Heart left ventricle (tissue), 16 donors: ENCODE measurements at regions of chr11 and their contacts with region 1.

Region 1: DNA sequence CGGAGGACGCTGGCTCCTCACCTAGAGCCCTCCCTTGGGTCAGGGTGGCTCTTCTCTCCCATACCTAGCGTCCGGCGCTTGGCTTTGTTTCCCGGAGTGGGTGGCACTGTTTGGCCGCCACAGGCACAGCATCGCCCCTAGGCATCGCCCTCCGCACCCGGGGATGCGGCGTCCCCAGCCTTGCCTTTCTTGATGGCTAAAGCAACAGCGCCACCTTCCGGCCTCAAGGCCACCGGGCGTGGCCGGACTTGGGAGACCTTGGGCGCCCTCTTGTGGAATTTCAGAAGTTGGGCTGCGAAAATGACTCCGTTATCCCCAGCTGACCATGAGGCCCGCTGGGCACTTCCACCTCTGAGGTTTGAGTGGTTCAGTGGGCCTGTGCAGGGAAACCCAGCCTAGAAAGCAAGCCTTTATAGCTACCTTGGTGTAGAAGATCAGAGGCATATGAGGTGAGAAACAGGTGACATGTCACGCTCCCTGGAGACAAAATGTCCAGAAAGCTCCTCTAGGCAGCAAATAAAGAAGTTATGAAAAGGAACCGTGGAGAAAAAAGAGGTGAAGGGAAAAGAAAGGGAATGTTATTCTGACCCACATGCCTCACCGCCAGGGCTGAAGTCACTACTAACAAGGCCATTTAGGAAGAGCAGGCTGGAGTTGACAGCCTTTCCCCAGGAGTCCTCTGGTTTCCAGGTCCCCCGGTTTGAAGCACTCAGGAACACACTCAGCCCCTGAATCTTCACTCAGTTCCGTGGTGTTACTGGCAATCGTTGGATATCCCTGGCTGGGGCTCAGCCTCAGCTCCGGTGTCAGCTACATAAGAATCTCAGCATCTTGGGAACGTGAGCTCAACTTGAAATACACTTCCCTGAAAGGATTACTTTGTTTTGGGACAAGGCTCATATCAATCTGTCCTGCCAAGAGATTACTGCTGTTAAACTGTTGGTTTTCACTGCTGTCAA is 54.1 kb downstream of the SNX19 start:
- DNase-seq: peak; percentile 87 to 95 (median 90)
- ATAC-seq: peak; percentile 38 to 72 (median 58)
- H3K4me3 ChIP-seq: peak overlapping the region in 1 of 12 donors; percentile 2
- H3K27ac ChIP-seq: peak overlapping the region in 1 of 12 donors; percentile 28
- H3K4me1 ChIP-seq: peaks cover 0 to 37% (median 15%) of the 10 kb centered on the region in 12 donors
- H3K27me3 ChIP-seq: no peaks in the 10 kb centered on the region
- CTCF ChIP-seq: peak; percentile 99 to 100 (median 100)
- POLR2A ChIP-seq: no peak

Region 2: DNA sequence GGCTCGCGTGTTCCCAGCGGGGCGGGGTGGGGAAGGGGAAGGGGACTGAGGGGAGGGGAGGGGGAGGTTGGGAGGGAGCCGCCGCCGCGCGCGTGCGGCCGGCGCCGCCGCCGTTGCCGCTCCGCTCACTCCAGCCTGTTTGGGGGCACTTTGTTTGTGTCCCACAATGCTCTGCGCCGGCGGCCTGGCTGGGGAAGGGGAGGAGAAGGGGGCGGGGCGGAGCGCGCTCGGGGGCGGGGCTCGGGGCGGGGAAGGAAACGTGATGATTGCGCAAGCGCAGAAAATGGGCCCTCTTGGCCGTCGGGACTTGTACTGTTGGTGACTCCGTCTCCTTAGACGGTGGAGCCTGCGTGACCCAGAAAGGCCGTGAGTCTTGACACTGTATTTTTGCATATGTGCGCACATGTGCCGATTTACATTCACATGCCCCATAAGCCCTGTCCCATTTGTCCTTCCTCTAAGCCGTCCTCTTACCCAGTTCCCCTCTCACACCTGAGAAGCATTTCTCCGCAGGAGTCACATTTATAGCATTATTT is 547.4 kb before region 1 on chr11 and contains the start of gene ZBTB44:
- intact Hi-C with region 1: loop called in 1 of 10 experiments (anchors 5 kb)
- DNase-seq: peak; percentile 94 to 97 (median 95)
- ATAC-seq: peak; percentile 97 to 98 (median 97)
- H3K4me3 ChIP-seq: peak within 1 kb of the TSS; percentile 64 to 99 (median 94)
- H3K27ac ChIP-seq: peak within 1 kb of the TSS; percentile 66 to 96 (median 92)
- H3K4me1 ChIP-seq: peaks cover 0 to 42% (median 23%) of the 10 kb centered on the region in 12 donors
- H3K27me3 ChIP-seq: no peaks in the 10 kb centered on the region
- CTCF ChIP-seq: no peak
- POLR2A ChIP-seq: no peak
- total RNA-seq, gene ZBTB44: 31.9 to 56.3 (median 40.3) TPM

Region 3: GRCh38 chr11:130894322-130895025 is 32.3 kb after region 1 on chr11:
- intact Hi-C with region 1: loop called in 5 of 10 experiments (anchors 2 kb)
- DNase-seq: peak; percentile 58 to 68 (median 67)
- ATAC-seq: peak in 3 of 4 donors; percentile 27 to 51 (median 40)
- H3K4me3 ChIP-seq: no peak overlapping the region
- H3K27ac ChIP-seq: peak overlapping the region in 5 of 12 donors; percentile 18 to 96 (median 29)
- H3K4me1 ChIP-seq: peaks cover 0 to 69% (median 26%) of the 10 kb centered on the region in 12 donors
- H3K27me3 ChIP-seq: no peaks in the 10 kb centered on the region
- CTCF ChIP-seq: peak; percentile 80 to 90 (median 88)
- POLR2A ChIP-seq: no peak

Region 4: GRCh38 chr11:130964058-130964792 is 102.0 kb after region 1 on chr11:
- intact Hi-C with region 1: no loop called
- DNase-seq: no peak
- ATAC-seq: no peak
- H3K4me3 ChIP-seq: no peak overlapping the region
- H3K27ac ChIP-seq: no peak overlapping the region
- H3K4me1 ChIP-seq: no peaks in the 10 kb centered on the region
- H3K27me3 ChIP-seq: no peaks in the 10 kb centered on the region
- CTCF ChIP-seq: no peak
- POLR2A ChIP-seq: no peak